AG04449 (cell line): ENCODE measurements at regions of chr9 and their contacts with region 1.

Region 1: DNA sequence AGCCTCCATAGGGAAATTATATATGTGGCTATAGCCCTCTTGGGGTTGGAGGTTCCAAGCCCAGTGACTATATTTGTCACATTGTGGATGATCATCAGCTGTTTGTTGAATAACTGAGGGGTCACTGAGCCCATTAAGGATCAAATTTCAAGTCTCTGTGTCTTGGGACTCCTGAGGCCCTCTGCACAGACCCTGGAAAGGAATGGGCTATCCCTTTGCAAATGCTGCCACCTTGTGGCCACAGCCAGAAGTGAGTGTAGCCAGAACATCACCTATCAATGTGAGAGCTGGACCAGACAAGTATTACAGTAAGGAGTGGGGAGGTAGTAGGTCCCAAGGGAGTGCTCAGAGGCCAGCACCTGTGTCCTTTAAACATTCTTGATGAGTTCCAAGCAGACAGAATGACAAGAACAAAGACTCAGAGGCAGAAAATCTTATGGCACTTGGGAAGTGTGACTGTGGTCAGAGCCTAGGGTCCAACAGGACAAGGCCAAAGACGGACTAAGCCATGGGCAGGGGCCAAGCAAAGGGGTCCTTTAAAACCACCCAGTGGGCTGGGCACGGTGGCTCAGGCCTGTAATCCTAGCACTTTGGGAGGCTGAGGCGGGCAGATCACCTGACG is 8.2 kb downstream of the RPP25L start:
- DNase-seq: no peak
- H3K4me3 ChIP-seq: no peak overlapping the region
- CTCF ChIP-seq: peak; percentile 88

Region 2: GRCh38 chr9:34332076-34332964 is 271.4 kb before region 1 on chr9:
- CTCF ChIA-PET with region 1: interaction called, 89 read pairs
- POLR2A ChIA-PET with region 1: no interaction called
- DNase-seq: no peak
- H3K4me3 ChIP-seq: no peak overlapping the region
- CTCF ChIP-seq: peak; percentile 35

Region 3: GRCh38 chr9:34437006-34437925 is 166.5 kb before region 1 on chr9:
- CTCF ChIA-PET with region 1: interaction called, 10 read pairs
- POLR2A ChIA-PET with region 1: no interaction called
- DNase-seq: no peak
- H3K4me3 ChIP-seq: no peak overlapping the region
- CTCF ChIP-seq: peak; percentile 71

Region 4: GRCh38 chr9:34479431-34479866 is 124.3 kb before region 1 on chr9:
- CTCF ChIA-PET with region 1: no interaction called
- POLR2A ChIA-PET with region 1: no interaction called
- DNase-seq: no peak
- H3K4me3 ChIP-seq: no peak overlapping the region
- CTCF ChIP-seq: no peak

Region 5: DNA sequence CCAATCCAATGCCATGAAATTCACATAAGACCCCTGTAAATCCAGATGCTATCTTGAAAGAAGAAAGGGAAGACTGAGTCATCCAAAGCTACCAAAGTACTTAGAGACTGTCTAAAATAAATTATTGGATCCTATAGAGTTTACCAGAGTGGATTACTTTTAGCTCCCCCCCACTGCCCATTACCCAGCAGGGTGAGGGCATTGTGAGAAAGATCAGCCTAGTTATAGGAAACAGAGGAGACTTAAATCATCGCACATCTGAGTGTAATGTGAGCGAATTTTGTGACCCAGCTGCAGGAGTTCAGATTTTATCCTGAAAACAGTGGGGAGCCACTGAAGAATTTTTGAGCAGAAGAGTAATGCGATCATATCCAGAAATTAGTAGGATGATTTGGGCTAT is 79.4 kb before region 1 on chr9:
- CTCF ChIA-PET with region 1: no interaction called
- POLR2A ChIA-PET with region 1: no interaction called
- DNase-seq: no peak
- H3K4me3 ChIP-seq: no peak overlapping the region
- CTCF ChIP-seq: no peak

Region 6: DNA sequence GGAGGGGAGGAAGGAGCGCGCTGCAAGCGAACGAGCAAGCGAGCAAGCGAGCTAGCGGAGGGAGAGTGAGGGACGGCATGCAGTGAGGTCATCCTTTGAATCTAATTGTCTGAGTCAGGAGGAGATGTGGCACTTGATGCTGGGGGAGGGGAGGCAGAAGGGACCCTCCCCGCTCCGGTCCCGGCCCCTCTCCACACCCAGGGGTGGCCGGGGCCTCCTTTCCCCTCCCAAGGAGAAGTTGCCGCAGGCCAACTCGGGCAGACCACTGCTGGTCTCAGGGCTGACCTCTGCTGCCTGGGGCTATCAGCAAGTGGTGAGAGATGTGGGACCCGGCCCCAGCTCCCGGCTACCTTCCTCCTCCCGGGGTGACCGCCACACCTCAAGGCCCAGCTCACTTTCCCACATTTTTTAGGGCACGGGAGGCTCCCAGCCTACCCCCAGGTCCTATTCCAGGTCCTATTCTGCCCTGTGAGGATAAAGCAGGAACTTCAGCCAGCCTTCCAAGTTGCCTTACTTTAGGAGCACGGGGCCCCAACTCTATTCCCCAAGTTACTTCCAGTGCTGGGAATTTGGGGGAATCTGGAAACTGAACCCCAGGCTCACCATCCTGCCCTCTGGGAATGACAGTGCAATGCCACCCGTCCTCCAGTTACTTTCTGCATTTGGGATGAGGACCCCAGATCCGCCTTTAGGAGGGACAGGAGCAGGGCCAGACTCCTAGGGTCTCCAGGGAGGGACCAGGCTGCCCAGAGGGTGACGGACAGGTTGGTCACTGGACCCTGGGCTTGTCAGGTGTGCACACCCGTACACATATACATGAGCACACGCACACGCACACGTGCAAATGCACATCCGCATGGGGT is 25.2 kb before region 1 on chr9:
- CTCF ChIA-PET with region 1: interaction called, 15 read pairs
- POLR2A ChIA-PET with region 1: no interaction called
- DNase-seq: no peak
- H3K4me3 ChIP-seq: peak overlapping the region; percentile 27; the same call in 1 of the 2 replicates
- CTCF ChIP-seq: no peak

Region 7: DNA sequence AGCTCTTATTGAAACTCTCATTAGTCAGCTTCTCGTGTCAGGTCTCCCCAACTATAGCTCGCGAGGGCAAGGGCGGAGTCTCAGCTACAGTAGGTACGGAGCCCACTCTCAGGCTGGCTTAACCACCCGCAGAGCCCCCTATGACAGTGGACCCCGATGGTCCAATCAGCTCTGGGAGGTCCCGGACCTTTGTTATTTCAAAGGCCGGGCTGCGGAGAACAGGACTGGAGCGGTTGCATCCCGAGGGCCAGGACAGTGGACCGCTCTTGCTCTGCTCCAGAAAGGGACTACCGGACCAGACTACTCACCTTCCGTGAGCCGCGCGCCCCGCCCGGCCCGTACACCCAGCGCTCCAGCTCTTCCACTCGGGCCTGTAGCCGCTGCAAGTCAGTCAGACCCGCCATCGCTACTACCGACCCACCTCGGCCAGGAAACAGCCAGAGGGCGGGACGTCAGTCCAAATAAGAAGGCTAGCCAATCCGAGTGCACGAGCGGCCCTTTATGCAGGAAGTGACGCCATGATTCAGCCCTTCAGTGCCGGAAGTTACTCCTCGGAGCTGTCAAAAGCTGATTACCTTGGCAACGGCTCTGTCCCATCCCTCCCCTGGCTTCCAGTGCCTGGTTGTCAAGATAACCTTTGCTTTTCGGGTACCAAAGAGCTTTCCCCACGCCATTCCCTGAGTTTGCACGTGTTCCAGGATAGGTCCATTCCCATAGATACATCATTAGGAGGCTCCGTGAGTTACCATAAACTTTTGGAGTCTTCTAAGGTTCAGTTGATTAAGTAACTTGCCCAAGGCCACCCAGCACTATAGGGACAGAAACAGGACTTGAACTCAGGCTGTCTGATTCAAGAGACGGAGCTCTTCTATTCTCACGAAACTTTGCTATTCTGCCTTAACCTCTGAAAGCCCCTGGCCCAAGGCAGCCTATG is 16.6 kb after region 1 on chr9 and contains the start of gene DCTN3:
- CTCF ChIA-PET with region 1: interaction called, 67 read pairs
- POLR2A ChIA-PET with region 1: no interaction called
- DNase-seq: peak; percentile 75
- H3K4me3 ChIP-seq: peak within 1 kb of the TSS; percentile 92
- CTCF ChIP-seq: no peak